ENCODE measurements at regions of chr7 and their contacts with region 1.

Region 1: GRCh38 chr7:99386584-99387238 is 12.2 kb downstream of the ARPC1B start:
- DNase-seq: peak; percentile 66
- ATAC-seq: peak; percentile 79
- H3K4me3 Mint-ChIP-seq: no peak overlapping the region
- H3K27ac Mint-ChIP-seq: peak overlapping the region; percentile 43
- H3K4me1 Mint-ChIP-seq: peaks cover 29% of the 10 kb centered on the region
- H3K27me3 Mint-ChIP-seq: no peaks in the 10 kb centered on the region

Region 2: DNA sequence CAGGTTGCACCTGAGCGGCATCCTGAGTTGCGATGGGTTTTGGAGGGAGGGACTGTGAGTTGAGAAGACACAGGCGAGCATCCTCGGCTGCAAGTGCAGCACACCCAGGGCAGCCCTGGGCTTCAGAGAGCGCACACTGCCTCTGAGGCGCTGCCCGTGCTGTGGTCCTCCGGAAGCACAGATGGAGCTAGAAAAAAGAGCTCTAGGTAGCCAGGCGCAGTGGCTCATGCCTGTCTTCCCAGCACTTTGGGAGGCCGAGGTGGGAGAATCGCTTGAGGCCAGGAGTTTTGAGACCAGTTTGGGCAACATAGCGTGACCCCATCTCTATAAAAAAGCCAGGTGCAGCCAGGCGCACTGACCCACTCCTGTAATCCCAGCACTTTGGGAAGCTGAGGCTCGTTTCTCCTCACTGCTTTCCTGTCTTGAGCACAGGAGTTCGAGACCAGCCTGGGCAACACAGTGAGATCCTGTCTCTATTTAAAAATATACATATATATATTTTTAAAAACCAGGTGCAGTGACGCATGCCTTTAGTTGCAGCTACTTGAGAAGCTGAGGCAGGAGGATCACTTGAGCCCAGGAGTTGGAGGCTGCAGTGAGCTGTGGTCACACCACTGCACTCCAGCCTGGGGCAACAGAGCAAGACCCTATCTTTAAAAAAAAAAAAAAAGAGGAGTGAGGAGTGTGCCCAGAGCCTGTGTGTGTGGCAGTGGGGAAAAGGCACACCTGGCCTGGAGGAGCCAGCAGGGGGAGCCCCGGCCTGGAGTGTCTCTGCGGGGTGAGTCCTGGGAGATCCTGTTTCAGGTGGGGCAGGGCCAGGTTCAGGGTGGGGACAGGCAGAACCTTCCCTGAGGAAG is 21.5 kb before region 1 on chr7:
- CTCF ChIA-PET with region 1: interaction called, 10 read pairs
- DNase-seq: peak; percentile 67
- ATAC-seq: peak; percentile 78
- H3K4me3 Mint-ChIP-seq: no peak overlapping the region
- H3K27ac Mint-ChIP-seq: no peak overlapping the region
- H3K4me1 Mint-ChIP-seq: peaks cover 16% of the 10 kb centered on the region
- H3K27me3 Mint-ChIP-seq: no peaks in the 10 kb centered on the region